ENCODE measurements at regions of chr5 and their contacts with region 1.

Region 1: GRCh38 chr5:142012792-142013388 is at the start of gene GNPDA1:
- DNase-seq: peak; percentile 93
- H3K4me3 Mint-ChIP-seq: peak within 1 kb of the TSS; percentile 90
- H3K27ac Mint-ChIP-seq: peak within 1 kb of the TSS; percentile 94
- H3K4me1 Mint-ChIP-seq: peaks cover 77% of the 10 kb centered on the region
- H3K27me3 Mint-ChIP-seq: no peaks in the 10 kb centered on the region
- total RNA-seq, gene GNPDA1: 108 and 114 TPM in 2 replicates

Region 2: DNA sequence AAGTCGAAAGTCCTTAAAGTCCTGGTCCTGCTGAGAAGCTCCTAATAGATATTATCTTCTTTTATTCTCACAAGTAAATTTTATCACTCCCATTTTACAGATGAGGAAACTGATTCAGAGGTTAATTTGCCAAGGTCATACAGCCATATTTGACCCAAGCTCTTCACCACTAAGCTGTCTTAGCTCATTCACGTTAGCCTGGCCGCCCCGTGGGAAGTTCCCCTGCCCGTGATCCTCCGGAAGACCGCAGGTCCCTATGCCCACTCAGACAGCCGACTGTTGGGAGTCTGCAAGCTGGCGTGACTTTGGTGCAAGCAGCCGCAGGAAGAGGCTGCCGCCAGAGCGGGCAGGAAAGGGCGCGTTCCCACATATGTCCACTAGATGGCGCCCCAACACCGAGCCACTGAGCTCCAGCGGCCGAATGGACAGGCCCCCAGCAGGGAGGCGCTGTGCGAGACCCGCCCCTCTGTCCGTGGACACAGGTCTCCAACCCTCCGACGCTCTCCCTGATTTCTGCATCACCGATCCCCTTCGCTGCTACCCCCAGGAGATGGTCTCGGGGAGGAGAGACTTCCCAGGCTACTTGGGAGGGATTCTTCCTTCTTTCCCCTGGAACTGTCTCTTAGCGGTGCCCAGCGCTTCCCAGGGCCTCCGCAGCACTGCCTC is 320.9 kb before region 1 on chr5:
- intact Hi-C with region 1: loop called (anchors 2 kb)
- DNase-seq: peak; percentile 97
- H3K4me3 Mint-ChIP-seq: peak overlapping the region; percentile 85
- H3K27ac Mint-ChIP-seq: peak overlapping the region; percentile 86
- H3K4me1 Mint-ChIP-seq: peaks cover 32% of the 10 kb centered on the region
- H3K27me3 Mint-ChIP-seq: peaks cover 26% of the 10 kb centered on the region

Region 3: GRCh38 chr5:141968914-141969608 is 43.8 kb before region 1 on chr5 and contains the start of gene RNF14:
- intact Hi-C with region 1: loop called (anchors 1 kb)
- DNase-seq: peak; percentile 99
- H3K4me3 Mint-ChIP-seq: peak within 1 kb of the TSS; percentile 89
- H3K27ac Mint-ChIP-seq: peak within 1 kb of the TSS; percentile 98
- H3K4me1 Mint-ChIP-seq: peaks cover 34% of the 10 kb centered on the region
- H3K27me3 Mint-ChIP-seq: no peaks in the 10 kb centered on the region
- total RNA-seq, gene RNF14: 28.8 and 32.2 TPM in 2 replicates

Region 4: GRCh38 chr5:142000703-142001484 is 12.0 kb before region 1 on chr5:
- intact Hi-C with region 1: loop called (anchors 2 kb)
- DNase-seq: no peak
- H3K4me3 Mint-ChIP-seq: no peak overlapping the region
- H3K27ac Mint-ChIP-seq: peak overlapping the region; percentile 90
- H3K4me1 Mint-ChIP-seq: peaks cover 41% of the 10 kb centered on the region
- H3K27me3 Mint-ChIP-seq: no peaks in the 10 kb centered on the region

Region 5: GRCh38 chr5:142053426-142054151 is 40.7 kb after region 1 on chr5:
- intact Hi-C with region 1: no loop called
- DNase-seq: no peak
- H3K4me3 Mint-ChIP-seq: no peak overlapping the region
- H3K27ac Mint-ChIP-seq: no peak overlapping the region
- H3K4me1 Mint-ChIP-seq: peaks cover 8% of the 10 kb centered on the region
- H3K27me3 Mint-ChIP-seq: no peaks in the 10 kb centered on the region

Region 6: DNA sequence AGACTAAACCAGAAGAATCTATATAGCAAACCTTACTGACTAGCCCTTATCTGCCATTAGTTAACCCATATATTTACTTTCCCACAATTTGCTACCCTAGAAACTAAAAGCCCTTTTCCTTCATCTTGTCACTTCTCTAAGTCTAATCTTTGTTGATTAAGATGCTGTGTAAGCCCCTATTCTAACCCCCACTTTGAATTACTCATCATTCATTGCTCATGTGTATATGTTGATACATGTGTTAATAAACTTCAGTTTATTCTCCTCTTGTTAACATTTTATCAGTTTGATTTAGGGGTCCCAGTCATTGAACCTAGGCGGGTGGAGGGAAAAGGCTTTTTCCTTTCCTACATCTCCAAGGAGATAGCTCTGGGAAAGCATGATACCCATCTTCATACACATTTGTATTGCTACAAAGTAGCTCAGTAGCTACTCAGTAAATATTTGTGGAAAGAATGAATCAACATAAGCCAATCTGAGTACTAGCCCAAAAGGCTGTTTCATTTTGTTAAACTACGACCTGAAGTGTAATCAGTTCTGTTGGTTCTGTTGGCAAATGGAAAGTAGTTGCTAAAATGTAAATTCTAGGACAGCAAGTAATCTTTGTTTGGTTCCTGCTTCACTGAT is 60.6 kb after region 1 on chr5:
- intact Hi-C with region 1: loop called (anchors 2 kb)
- DNase-seq: no peak
- H3K4me3 Mint-ChIP-seq: no peak overlapping the region
- H3K27ac Mint-ChIP-seq: peak overlapping the region; percentile 89
- H3K4me1 Mint-ChIP-seq: peaks cover 31% of the 10 kb centered on the region
- H3K27me3 Mint-ChIP-seq: no peaks in the 10 kb centered on the region

Region 7: GRCh38 chr5:142108432-142109330 is 95.8 kb after region 1 on chr5 and contains the start of gene NDFIP1:
- intact Hi-C with region 1: loop called (anchors 1 kb)
- DNase-seq: peak; percentile 96
- H3K4me3 Mint-ChIP-seq: peak within 1 kb of the TSS; percentile 93
- H3K27ac Mint-ChIP-seq: peak within 1 kb of the TSS; percentile 97
- H3K4me1 Mint-ChIP-seq: peaks cover 55% of the 10 kb centered on the region
- H3K27me3 Mint-ChIP-seq: no peaks in the 10 kb centered on the region
- total RNA-seq, gene NDFIP1: 114 and 122 TPM in 2 replicates

Region 8: GRCh38 chr5:142356716-142357473 is 344.0 kb after region 1 on chr5:
- intact Hi-C with region 1: loop called (anchors 2 kb)
- DNase-seq: peak; percentile 97
- H3K4me3 Mint-ChIP-seq: peak overlapping the region; percentile 79
- H3K27ac Mint-ChIP-seq: peak overlapping the region; percentile 94
- H3K4me1 Mint-ChIP-seq: peaks cover 40% of the 10 kb centered on the region
- H3K27me3 Mint-ChIP-seq: peaks cover 3% of the 10 kb centered on the region

Measured in activated CD4-positive, alpha-beta T cell treated with anti-CD3 and anti-CD28 coated beads, Interleukin-2, amount 10 ng/mL, durations not matched to agents 24 days and 14 days (primary cell).